H1 (cell line): ENCODE measurements at regions of chr1 and their contacts with region 1.

Region 1: GRCh38 chr1:182839209-182840065 is at the start of gene DHX9:
- DNase-seq: peak; percentile 69 to 99
- H3K4me3 ChIP-seq: peak within 1 kb of the TSS; percentile 88 to 99 (median 94)
- H3K27ac ChIP-seq: peak within 1 kb of the TSS; percentile 98
- H3K4me1 ChIP-seq: peaks cover 0 to 6% (median 3%) of the 10 kb centered on the region in 4 experiments; a peak in 4 of 7 replicates
- H3K27me3 ChIP-seq: no peaks in the 10 kb centered on the region
- CTCF ChIP-seq: peak; percentile 15 to 32 (median 29); a peak in 3 of 4 replicates
- EP300 ChIP-seq: no peak
- POLR2A ChIP-seq: peak; percentile 98
- RAD21 ChIP-seq: no peak
- total RNA-seq, gene DHX9: 329 and 333 TPM in 2 replicates

Region 2: DNA sequence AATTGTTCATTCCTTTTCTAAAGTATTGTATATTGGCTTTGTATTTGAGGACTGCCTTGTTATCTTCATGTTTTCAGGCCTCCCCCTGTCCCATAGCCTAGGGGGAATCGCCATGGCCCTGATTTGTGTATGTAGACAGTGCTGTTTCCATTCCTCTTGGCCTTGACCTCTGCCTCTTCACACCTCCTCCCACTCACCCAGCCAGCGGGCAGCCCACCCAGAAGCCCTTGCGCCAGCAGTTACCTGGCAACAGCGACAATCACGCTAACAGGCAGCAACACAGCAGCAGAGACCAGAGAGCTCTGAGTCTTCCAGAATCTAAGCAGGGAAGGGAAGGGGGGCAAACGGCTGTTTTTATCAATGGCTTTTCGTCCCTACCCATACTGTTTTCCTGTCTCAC is 99.9 kb before region 1 on chr1:
- CTCF ChIA-PET with region 1: no interaction called
- POLR2A ChIA-PET with region 1: no interaction called
- DNase-seq: no peak
- H3K4me3 ChIP-seq: no peak overlapping the region
- H3K27ac ChIP-seq: no peak overlapping the region
- H3K4me1 ChIP-seq: no peaks in the 10 kb centered on the region
- H3K27me3 ChIP-seq: no peaks in the 10 kb centered on the region
- CTCF ChIP-seq: no peak
- EP300 ChIP-seq: no peak
- POLR2A ChIP-seq: no peak
- RAD21 ChIP-seq: no peak

Region 3: GRCh38 chr1:182829285-182829932 is 10.0 kb before region 1 on chr1:
- CTCF ChIA-PET with region 1: no interaction called
- POLR2A ChIA-PET with region 1: interaction called, 32 read pairs
- DNase-seq: no peak
- H3K4me3 ChIP-seq: no peak overlapping the region
- H3K27ac ChIP-seq: no peak overlapping the region
- H3K4me1 ChIP-seq: no peaks in the 10 kb centered on the region
- H3K27me3 ChIP-seq: no peaks in the 10 kb centered on the region
- CTCF ChIP-seq: no peak
- EP300 ChIP-seq: no peak
- POLR2A ChIP-seq: no peak
- RAD21 ChIP-seq: no peak

Region 4: GRCh38 chr1:182869241-182869666 is 29.8 kb after region 1 on chr1:
- CTCF ChIA-PET with region 1: no interaction called
- POLR2A ChIA-PET with region 1: interaction called, 93 read pairs
- DNase-seq: peak in 1 of 2 experiments; percentile 85
- H3K4me3 ChIP-seq: no peak overlapping the region
- H3K27ac ChIP-seq: peak overlapping the region; percentile 61
- H3K4me1 ChIP-seq: no peaks in the 10 kb centered on the region
- H3K27me3 ChIP-seq: no peaks in the 10 kb centered on the region
- CTCF ChIP-seq: no peak
- EP300 ChIP-seq: peak in 1 of 2 experiments; percentile 94; a peak in 2 of 3 replicates
- POLR2A ChIP-seq: 0 out of 3 replicates have a peak, but pooled peaks of 1 of the 2 experiments have one; percentile 31
- RAD21 ChIP-seq: no peak

Region 5: DNA sequence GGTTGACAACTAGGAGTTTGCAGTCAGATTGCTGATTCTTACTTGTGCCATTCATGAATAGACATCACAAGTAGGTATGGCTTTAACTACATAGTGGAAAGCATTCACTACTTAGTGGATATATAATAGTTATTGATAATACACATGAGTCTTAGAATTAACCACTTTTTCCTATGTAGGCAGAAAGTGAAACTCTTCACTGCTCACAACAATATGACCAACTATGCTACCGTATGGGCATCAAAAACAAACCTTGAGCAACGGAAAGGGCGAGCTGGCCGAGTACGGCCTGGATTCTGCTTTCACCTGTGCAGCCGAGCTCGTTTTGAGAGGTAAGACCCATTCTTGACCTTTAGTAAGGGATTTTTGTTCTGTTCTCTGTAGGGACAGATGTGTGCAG is 38.4 kb after region 1 on chr1:
- CTCF ChIA-PET with region 1: interaction called, 3 read pairs
- POLR2A ChIA-PET with region 1: interaction called, 14 read pairs
- DNase-seq: no peak
- H3K4me3 ChIP-seq: no peak overlapping the region
- H3K27ac ChIP-seq: no peak overlapping the region
- H3K4me1 ChIP-seq: no peaks in the 10 kb centered on the region
- H3K27me3 ChIP-seq: no peaks in the 10 kb centered on the region
- CTCF ChIP-seq: no peak
- EP300 ChIP-seq: no peak
- POLR2A ChIP-seq: no peak
- RAD21 ChIP-seq: no peak